Lower lobe of right lung (tissue), 2 donors: ENCODE measurements at regions of chr19 and their contacts with region 1.

Region 1: DNA sequence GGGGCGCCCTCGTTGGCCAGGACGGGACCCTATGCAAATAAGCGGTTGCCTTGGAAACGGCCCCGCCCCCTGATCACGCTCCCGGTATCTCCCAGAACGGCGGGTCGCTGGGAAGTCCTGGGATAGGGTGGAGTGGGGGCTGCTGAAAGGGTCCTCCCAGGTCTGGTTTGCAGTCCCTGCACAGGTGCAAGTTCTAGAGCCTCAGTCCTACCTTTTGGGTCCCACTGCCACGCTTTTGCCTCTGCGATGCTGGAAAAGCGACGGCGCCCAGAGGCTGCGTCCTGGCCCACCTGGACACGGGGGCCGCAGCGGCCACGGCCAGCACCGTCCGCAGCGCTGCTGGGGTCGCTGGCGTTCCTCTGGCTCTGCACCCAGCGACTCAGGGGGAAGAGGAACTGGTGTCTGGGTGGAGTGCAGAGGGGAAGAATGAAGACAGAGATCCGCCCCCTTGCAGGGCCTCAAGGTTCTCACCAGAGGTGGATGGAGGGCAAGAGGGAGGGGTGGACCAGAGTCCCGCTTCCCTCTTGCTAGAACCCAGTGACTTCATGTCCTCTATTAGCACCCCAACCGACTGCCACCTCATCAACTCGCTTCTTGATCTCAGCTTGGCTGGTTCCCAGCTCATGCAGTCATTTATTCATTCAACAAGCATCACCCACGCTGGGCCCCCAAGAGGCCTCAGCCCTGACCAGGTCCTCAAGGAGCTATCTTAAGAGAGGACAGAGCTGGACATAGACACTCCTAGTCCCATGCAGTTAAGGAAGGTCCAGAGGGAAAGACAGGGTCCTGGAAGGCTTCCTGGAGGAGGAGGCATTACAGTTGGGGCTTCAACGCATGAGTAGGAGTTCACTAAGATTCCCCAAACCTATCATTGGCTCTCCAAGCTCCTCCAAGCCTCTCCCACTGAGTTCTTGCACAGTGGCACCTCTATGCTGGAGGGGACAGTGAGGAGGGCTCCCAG is at the start of gene LRRC25:
- DNase-seq: peak; percentile 81
- ATAC-seq: peak; percentile 67 to 79
- H3K4me3 ChIP-seq: peak within 1 kb of the TSS; percentile 53
- H3K27ac ChIP-seq: peak within 1 kb of the TSS; percentile 41
- H3K4me1 ChIP-seq: peaks cover 32% of the 10 kb centered on the region
- H3K27me3 ChIP-seq: peaks cover 19% of the 10 kb centered on the region
- CTCF ChIP-seq: no peak
- total RNA-seq, gene LRRC25: 35.4 TPM

Region 2: DNA sequence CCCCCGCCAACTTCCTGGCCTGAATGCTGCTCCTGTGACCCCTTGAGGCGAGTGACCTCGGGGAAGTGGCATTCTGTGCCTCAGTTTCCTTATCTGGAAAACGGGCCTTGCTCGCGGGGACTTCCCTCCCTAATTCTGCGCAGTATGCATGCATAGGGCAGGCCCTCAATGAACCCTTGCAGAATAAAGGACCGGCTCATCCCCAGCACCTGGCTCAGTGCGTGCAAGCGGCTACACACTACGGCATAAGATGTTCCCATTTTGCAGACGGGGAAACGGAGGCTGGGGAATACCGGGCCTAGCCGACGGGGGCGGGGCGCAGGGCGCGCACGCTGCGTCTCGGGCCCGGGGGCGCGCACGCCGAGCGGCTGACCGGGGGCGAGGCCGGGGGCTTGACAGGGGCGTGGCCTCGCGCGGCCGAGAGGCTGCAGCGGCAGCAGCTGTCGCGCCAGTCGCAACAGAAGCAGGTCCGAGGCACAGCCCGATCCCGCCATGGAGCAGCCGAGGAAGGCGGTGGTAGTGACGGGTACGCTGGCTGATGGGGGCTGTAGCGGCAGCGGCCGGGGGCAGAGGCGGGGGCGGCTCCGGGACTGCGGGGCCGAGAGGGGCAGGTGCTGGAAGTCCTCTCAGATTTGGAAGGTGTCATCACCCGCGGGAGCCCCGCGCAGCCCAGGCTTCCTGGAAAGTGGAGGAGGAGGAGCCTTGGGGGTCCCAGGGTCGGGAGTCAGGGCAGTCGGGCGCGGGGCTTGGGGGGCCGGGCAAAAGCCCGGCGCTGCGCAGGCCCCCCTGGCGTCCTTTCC is 57.1 kb before region 1 on chr19 and contains the start of gene PGPEP1:
- intact Hi-C with region 1: loop called (anchors 10 kb)
- DNase-seq: peak; percentile 85
- ATAC-seq: peak; percentile 93 to 94
- H3K4me3 ChIP-seq: peak within 1 kb of the TSS; percentile 96
- H3K27ac ChIP-seq: peak within 1 kb of the TSS; percentile 79
- H3K4me1 ChIP-seq: peaks cover 15% of the 10 kb centered on the region
- H3K27me3 ChIP-seq: no peaks in the 10 kb centered on the region
- CTCF ChIP-seq: no peak
- total RNA-seq, gene PGPEP1: 40.9 TPM

Region 3: GRCh38 chr19:18450931-18451845 is 53.7 kb after region 1 on chr19:
- intact Hi-C with region 1: no loop called
- DNase-seq: peak; percentile 88
- ATAC-seq: peak; percentile 84 to 90
- H3K4me3 ChIP-seq: no peak overlapping the region
- H3K27ac ChIP-seq: no peak overlapping the region
- H3K4me1 ChIP-seq: peaks cover 10% of the 10 kb centered on the region
- H3K27me3 ChIP-seq: no peaks in the 10 kb centered on the region
- CTCF ChIP-seq: peak; percentile 98